PC-9 (cell line): ENCODE measurements at regions of chr2 and their contacts with region 1.

Region 1: DNA sequence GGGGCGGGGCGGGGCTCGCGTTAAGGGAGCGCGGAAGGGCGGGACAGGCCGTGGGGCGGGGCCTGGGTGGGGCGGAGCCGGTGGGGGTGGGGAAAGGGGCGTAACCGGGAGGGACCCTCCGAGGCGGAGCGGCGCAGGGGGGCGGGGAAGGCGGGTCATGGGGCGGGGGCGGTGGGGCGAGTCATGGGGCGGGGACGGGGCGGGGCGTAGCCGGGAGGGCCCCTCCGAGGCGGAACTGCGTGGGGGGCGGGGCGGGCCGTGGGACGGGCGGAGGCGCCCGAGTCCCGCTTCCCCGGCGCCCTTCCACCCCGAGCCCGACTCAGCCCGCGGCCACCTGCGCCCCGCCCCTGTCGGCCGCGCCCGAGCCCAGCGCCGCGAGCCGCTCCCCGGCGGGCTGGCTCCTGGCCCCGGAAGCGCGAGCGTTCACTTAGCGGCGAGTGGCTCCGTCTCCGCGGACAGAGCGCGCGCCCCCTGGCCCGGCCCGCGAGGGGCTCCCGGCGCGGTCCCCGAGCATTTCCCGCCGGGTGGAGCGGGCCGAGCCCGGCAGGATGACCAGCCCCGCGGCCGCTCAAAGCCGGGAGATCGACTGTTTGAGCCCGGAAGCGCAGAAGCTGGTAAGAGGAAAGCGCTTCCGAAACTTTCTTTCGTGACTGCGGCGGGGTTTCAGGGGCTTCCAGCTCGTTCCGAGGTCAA is 64.7 kb downstream of the LRRFIP1 start:
- DNase-seq: peak; percentile 74 to 99
- H3K4me3 ChIP-seq: peak overlapping the region; percentile 83
- H3K27ac ChIP-seq: peak overlapping the region; percentile 97
- H3K4me1 ChIP-seq: peaks cover 76% of the 10 kb centered on the region
- H3K27me3 ChIP-seq: no peaks in the 10 kb centered on the region
- CTCF ChIP-seq: no peak

Region 2: DNA sequence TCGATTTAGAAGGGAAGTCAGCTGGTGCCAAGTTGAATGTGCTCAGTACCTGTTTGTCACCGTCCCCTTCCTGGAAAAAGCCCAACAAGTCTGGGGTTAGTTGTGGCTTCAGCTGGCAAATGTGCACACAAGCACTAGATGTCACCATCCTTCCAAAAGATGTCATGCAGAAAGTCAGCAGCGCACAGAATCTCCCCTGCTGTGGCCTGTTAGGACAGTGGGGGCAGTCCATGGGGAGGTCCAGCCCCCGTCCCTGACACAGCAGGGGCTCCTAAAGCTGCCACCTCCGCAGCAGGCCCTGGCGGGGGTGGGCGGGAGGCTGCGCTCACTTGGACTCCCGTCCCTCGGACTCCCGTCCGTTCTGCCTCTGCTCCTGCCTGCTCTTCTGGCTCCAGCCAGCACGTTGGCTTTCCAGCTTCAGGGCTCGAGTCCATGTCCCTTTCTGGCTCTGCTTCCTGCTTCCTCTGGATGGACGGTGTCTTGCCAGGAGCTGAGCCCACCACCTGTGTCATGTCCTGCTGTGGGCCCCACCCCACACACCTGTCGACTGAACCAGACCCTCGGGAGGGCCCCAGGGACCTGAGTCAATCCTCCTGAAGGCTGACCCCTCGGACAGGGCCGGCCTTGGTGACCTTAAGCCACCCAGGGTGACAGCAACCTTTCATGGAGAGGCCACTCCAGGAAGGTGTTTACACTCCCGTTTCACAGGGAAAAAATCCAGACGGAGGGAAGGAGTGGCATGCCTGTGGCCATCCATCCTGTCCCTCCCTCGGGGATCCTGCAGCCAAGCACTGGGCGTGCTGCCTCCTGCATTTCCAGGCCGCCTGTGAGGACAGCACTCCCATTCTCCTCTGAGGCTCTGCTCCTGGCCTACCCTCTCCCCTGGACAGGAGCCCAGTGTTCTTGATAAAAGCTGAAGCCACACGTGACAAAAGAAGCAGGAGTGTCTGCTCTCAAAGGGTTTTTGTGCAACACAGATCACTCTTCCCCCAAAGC is 110.0 kb before region 1 on chr2:
- CTCF ChIA-PET with region 1: no interaction called
- POLR2A ChIA-PET with region 1: interaction called, 18 read pairs
- intact Hi-C with region 1: no loop called
- DNase-seq: no peak
- H3K4me3 ChIP-seq: no peak overlapping the region
- H3K27ac ChIP-seq: no peak overlapping the region
- H3K4me1 ChIP-seq: no peaks in the 10 kb centered on the region
- H3K27me3 ChIP-seq: no peaks in the 10 kb centered on the region
- CTCF ChIP-seq: no peak

Region 3: DNA sequence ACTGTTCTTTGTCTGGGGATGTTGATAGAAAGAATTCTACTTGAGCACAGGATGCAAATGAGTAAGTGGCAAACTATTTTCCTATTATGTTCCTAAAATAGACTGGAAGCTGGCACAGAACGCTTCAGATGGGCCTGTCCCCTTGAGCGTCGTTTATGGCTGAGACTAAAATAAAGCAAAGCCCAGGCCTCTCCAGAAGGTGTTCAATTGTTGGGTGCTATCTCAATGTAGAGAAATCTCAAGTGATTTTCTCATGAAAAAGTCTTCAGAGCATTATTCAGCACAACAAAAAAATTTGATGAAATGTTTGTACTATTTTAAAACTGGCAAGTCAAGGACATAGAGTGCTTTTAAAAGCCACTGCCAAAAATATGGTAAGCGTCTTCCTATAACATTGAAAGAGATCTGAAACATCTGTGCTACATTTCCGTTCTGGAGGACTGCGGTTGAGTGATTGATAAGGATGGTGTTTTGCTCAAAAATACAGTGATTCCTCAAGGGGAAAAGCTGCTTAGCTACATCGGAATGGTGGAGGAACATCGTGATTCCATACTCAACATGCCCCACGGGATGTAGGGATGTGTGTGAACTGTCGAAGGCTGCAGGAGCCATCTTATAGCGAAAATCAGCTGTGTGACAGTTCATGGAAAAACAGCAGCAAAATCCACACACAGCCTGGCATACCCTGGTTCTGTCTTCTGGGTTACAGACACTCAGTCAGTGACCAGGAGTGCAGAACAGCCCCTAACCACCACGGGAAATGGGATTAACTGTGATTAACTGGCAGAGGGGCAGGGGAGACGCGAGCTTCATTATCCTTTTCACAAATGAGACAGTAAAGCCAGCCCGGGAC is 75.1 kb before region 1 on chr2:
- CTCF ChIA-PET with region 1: no interaction called
- POLR2A ChIA-PET with region 1: interaction called, 7 read pairs
- intact Hi-C with region 1: loop called (anchors 1 kb)
- DNase-seq: peak in 1 of 2 experiments; percentile 50
- H3K4me3 ChIP-seq: no peak overlapping the region
- H3K27ac ChIP-seq: no peak overlapping the region
- H3K4me1 ChIP-seq: peaks cover 19% of the 10 kb centered on the region
- H3K27me3 ChIP-seq: no peaks in the 10 kb centered on the region
- CTCF ChIP-seq: no peak

Region 4: GRCh38 chr2:237674731-237675276 is 17.2 kb before region 1 on chr2:
- CTCF ChIA-PET with region 1: interaction called, 20 read pairs
- POLR2A ChIA-PET with region 1: interaction called, 3 read pairs
- intact Hi-C with region 1: loop called (anchors 1 kb)
- DNase-seq: peak in 1 of 2 experiments; percentile 88
- H3K4me3 ChIP-seq: no peak overlapping the region
- H3K27ac ChIP-seq: no peak overlapping the region
- H3K4me1 ChIP-seq: peaks cover 27% of the 10 kb centered on the region
- H3K27me3 ChIP-seq: no peaks in the 10 kb centered on the region
- CTCF ChIP-seq: no peak

Region 5: GRCh38 chr2:237714690-237715458 is 22.8 kb after region 1 on chr2:
- CTCF ChIA-PET with region 1: interaction called, 3 read pairs
- POLR2A ChIA-PET with region 1: no interaction called
- intact Hi-C with region 1: loop called (anchors 1 kb)
- DNase-seq: peak in 1 of 2 experiments; percentile 70
- H3K4me3 ChIP-seq: no peak overlapping the region
- H3K27ac ChIP-seq: 0 out of 2 replicates have a peak overlapping the region, but pooled peaks have one; percentile 1
- H3K4me1 ChIP-seq: no peaks in the 10 kb centered on the region
- H3K27me3 ChIP-seq: no peaks in the 10 kb centered on the region
- CTCF ChIP-seq: no peak

Region 6: GRCh38 chr2:237744613-237745249 is 52.7 kb after region 1 on chr2:
- CTCF ChIA-PET with region 1: interaction called, 10 read pairs
- POLR2A ChIA-PET with region 1: no interaction called
- intact Hi-C with region 1: loop called (anchors 1 kb)
- DNase-seq: peak in 1 of 2 experiments; percentile 84
- H3K4me3 ChIP-seq: no peak overlapping the region
- H3K27ac ChIP-seq: no peak overlapping the region; the same call in 1 of the 2 replicates
- H3K4me1 ChIP-seq: peaks cover 35% of the 10 kb centered on the region
- H3K27me3 ChIP-seq: no peaks in the 10 kb centered on the region
- CTCF ChIP-seq: peak; percentile 94

Region 7: DNA sequence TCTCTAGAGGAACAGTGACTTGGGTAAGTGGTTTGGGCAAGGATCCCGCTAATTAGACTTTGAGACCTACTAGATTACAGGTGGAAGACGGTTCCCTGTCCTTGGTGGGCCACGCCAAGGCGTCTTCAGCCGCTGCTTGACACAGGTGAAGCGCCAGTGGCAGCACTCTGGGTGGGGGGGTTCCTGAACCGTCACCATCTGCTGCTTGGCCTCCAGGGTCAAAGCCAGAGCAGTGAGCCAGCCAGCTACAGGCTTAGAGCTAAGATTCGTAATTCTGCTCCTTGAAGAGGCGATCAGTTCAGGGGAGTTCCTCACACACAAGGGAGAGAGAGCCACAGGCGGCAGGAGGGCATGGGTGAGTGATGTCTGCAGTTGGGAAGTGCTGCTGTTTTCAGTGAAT is 67.1 kb after region 1 on chr2:
- CTCF ChIA-PET with region 1: no interaction called
- POLR2A ChIA-PET with region 1: no interaction called
- intact Hi-C with region 1: no loop called
- DNase-seq: no peak
- H3K4me3 ChIP-seq: no peak overlapping the region
- H3K27ac ChIP-seq: no peak overlapping the region
- H3K4me1 ChIP-seq: no peaks in the 10 kb centered on the region; the same call in 1 of the 2 replicates
- H3K27me3 ChIP-seq: no peaks in the 10 kb centered on the region
- CTCF ChIP-seq: no peak

Region 8: GRCh38 chr2:238288650-238289573 is 596.9 kb after region 1 on chr2:
- CTCF ChIA-PET with region 1: no interaction called
- POLR2A ChIA-PET with region 1: no interaction called
- intact Hi-C with region 1: loop called (anchors 10 kb)
- DNase-seq: peak; percentile 96 to 99
- H3K4me3 ChIP-seq: peak overlapping the region; percentile 72
- H3K27ac ChIP-seq: 0 out of 2 replicates have a peak overlapping the region, but pooled peaks have one; percentile 24
- H3K4me1 ChIP-seq: peaks cover 55% of the 10 kb centered on the region
- H3K27me3 ChIP-seq: no peaks in the 10 kb centered on the region
- CTCF ChIP-seq: peak; percentile 37; the same call in 1 of the 2 replicates

Region 9: GRCh38 chr2:238305092-238305862 is 613.2 kb after region 1 on chr2:
- CTCF ChIA-PET with region 1: no interaction called
- POLR2A ChIA-PET with region 1: no interaction called
- intact Hi-C with region 1: no loop called
- DNase-seq: no peak
- H3K4me3 ChIP-seq: no peak overlapping the region
- H3K27ac ChIP-seq: no peak overlapping the region
- H3K4me1 ChIP-seq: no peaks in the 10 kb centered on the region
- H3K27me3 ChIP-seq: no peaks in the 10 kb centered on the region
- CTCF ChIP-seq: peak; percentile 56; the same call in 1 of the 2 replicates